Activated CD4-positive, alpha-beta T cell treated with anti-CD3 and anti-CD28 coated beads for 36 hours (primary cell): ENCODE measurements at regions of chr3 and their contacts with region 1.

Region 1: DNA sequence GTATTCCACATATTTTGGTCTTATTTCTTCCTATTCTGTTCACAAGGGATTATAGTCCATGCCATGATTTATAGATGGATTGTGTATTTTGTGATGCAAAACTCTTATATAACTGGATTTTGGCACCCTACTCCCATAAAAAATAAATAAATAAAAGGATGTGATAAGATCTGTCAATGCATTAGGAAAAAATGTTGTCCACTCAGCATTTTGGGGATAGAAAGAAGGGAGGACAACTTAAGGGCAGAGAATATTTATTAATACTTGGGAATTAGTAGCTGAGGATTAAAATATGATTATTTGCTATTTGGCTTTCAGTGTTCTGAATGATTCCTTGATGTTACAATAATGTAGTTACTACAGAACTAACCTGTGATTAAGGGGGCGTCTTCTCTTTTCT is 682.6 kb downstream of the ZBBX start:
- DNase-seq: no peak
- ATAC-seq: no peak
- H3K4me3 Mint-ChIP-seq: no peak overlapping the region
- H3K27ac Mint-ChIP-seq: no peak overlapping the region
- H3K4me1 Mint-ChIP-seq: no peaks in the 10 kb centered on the region
- H3K27me3 Mint-ChIP-seq: no peaks in the 10 kb centered on the region

Region 2: DNA sequence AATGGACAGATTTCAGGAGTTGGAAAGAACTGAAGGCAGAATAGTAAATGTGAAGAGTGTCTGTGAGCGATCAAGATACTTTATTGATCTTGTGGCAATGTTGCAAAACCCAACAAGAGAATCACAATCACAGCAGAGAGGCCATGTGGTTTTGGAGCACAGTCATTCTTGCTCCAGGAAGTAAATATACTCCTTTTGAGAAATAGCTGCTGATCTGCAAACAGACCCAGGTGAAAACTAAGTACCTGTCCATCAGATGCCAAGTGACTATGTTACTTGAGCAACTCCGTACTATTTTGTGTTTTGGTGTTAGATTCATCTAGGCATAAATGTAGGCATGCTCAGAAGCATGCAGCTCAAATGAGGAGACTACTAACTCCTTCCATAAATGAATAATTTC is 54.7 kb after region 1 on chr3:
- CTCF ChIA-PET with region 1: no interaction called
- POLR2A ChIA-PET with region 1: no interaction called
- intact Hi-C with region 1: loop called in 1 of 2 experiments (anchors 10 kb)
- DNase-seq: no peak
- ATAC-seq: no peak
- H3K4me3 Mint-ChIP-seq: no peak overlapping the region
- H3K27ac Mint-ChIP-seq: no peak overlapping the region
- H3K4me1 Mint-ChIP-seq: no peaks in the 10 kb centered on the region
- H3K27me3 Mint-ChIP-seq: no peaks in the 10 kb centered on the region

Region 3: GRCh38 chr3:167151636-167152035 is 454.1 kb after region 1 on chr3:
- CTCF ChIA-PET with region 1: no interaction called
- POLR2A ChIA-PET with region 1: no interaction called
- intact Hi-C with region 1: no loop called
- DNase-seq: no peak
- ATAC-seq: no peak
- H3K4me3 Mint-ChIP-seq: no peak overlapping the region
- H3K27ac Mint-ChIP-seq: no peak overlapping the region
- H3K4me1 Mint-ChIP-seq: no peaks in the 10 kb centered on the region
- H3K27me3 Mint-ChIP-seq: no peaks in the 10 kb centered on the region